CD4-positive, alpha-beta memory T cell (primary cell): ENCODE measurements at regions of chrX and their contacts with region 1.

Region 1: DNA sequence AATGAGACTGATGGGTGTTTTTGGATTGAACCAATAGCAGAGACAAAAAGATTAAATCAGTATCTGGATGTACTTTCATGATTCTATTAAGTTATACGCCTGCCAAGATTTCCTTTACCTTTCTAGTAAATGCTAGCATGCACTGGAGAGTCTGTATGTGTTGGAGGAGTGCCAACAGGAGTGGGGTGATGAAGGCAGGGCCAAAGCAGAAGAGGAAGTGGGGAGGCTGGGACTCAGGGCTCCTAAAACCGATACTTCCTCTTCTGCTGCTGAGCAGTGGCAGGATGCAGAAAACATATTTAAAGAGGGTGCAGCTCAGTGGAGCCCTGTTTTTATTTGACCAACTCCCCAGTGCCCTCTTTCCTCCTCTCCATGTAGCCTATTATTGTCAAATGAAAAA is 5.6 kb downstream of the CYSLTR1 start:
- DNase-seq: peak; percentile 66 to 77 (median 74)
- H3K4me3 ChIP-seq: no peak overlapping the region
- H3K4me3 Mint-ChIP-seq: peak overlapping the region; percentile 44 to 75 (median 60)
- H3K27ac ChIP-seq: no peak overlapping the region
- H3K27ac Mint-ChIP-seq: peak overlapping the region; percentile 54 to 90 (median 83)
- H3K4me1 ChIP-seq: peaks cover 30% of the 10 kb centered on the region
- H3K4me1 Mint-ChIP-seq: peaks cover 20 to 42% (median 28%) of the 10 kb centered on the region in 4 donors
- H3K27me3 ChIP-seq: no peaks in the 10 kb centered on the region
- H3K27me3 Mint-ChIP-seq: no peaks in the 10 kb centered on the region

Region 2: GRCh38 chrX:78283511-78283910 is 38.3 kb before region 1 on chrX:
- CTCF ChIA-PET with region 1: no interaction called
- POLR2A ChIA-PET with region 1: no interaction called
- intact Hi-C with region 1: loop called (anchors 10 kb)
- DNase-seq: no peak
- H3K4me3 ChIP-seq: no peak overlapping the region
- H3K4me3 Mint-ChIP-seq: no peak overlapping the region
- H3K27ac ChIP-seq: no peak overlapping the region
- H3K27ac Mint-ChIP-seq: no peak overlapping the region
- H3K4me1 ChIP-seq: no peaks in the 10 kb centered on the region
- H3K4me1 Mint-ChIP-seq: no peaks in the 10 kb centered on the region
- H3K27me3 ChIP-seq: no peaks in the 10 kb centered on the region
- H3K27me3 Mint-ChIP-seq: no peaks in the 10 kb centered on the region

Region 3: DNA sequence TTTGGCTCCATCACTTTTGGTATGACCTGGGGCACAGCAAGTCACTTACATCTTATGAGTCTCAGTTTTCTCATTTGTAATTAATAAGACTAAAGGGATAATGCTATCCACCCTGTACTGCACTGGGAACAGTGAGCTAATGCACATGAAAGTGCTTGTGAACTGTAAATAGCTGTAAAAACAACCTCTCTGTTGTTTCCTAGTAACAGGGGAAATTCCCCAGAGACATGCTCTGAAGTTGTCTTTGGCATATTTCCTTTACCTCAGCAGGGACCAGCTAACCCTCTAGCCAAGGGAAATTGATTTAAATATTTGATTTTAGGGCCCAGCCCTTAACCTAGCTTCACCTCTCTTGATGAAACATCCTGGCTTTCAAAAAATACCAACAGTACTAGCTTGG is 11.7 kb after region 1 on chrX:
- CTCF ChIA-PET with region 1: interaction called, 4 read pairs
- POLR2A ChIA-PET with region 1: interaction called, 13 read pairs
- intact Hi-C with region 1: loop called (anchors 1 kb)
- DNase-seq: peak; percentile 55 to 79 (median 69)
- H3K4me3 ChIP-seq: no peak overlapping the region
- H3K4me3 Mint-ChIP-seq: peak overlapping the region in 4 of 8 donors; percentile 4 to 70 (median 60)
- H3K27ac ChIP-seq: peak overlapping the region; percentile 53
- H3K27ac Mint-ChIP-seq: peak overlapping the region; percentile 86 to 95 (median 93)
- H3K4me1 ChIP-seq: peaks cover 74% of the 10 kb centered on the region
- H3K4me1 Mint-ChIP-seq: peaks cover 38 to 81% (median 54%) of the 10 kb centered on the region in 4 donors
- H3K27me3 ChIP-seq: no peaks in the 10 kb centered on the region
- H3K27me3 Mint-ChIP-seq: no peaks in the 10 kb centered on the region

Region 4: DNA sequence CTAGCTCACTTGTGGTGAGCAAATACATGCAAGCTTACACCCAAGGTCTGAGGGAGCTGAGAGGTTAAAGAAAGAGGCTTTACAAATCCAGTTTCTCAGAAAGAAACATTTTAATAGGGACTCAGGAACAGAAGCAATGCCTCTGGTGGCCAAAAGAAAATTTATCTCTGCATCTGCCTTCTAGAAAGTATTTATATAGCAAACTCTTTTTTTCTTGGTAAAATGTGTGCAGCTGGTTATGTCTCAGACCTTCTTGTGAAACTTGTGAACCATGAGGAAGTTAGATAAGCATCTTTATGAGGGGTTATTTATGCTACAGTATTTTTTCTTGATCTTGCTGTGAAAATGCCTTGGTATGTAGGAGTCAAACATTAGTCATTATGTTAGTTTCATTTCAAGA is 54.1 kb after region 1 on chrX:
- CTCF ChIA-PET with region 1: no interaction called
- POLR2A ChIA-PET with region 1: no interaction called
- intact Hi-C with region 1: no loop called
- DNase-seq: peak in 4 of 5 donors; percentile 2 to 32 (median 12)
- H3K4me3 ChIP-seq: no peak overlapping the region
- H3K4me3 Mint-ChIP-seq: peak overlapping the region in 1 of 8 donors; percentile 43
- H3K27ac ChIP-seq: no peak overlapping the region
- H3K27ac Mint-ChIP-seq: peak overlapping the region in 3 of 7 donors; percentile 44 to 57 (median 51)
- H3K4me1 ChIP-seq: peaks cover 6% of the 10 kb centered on the region
- H3K4me1 Mint-ChIP-seq: peaks cover 4 to 17% (median 11%) of the 10 kb centered on the region in 4 donors
- H3K27me3 ChIP-seq: no peaks in the 10 kb centered on the region
- H3K27me3 Mint-ChIP-seq: no peaks in the 10 kb centered on the region